ENCODE measurements at regions of chr2 and their contacts with region 1.

Region 1: DNA sequence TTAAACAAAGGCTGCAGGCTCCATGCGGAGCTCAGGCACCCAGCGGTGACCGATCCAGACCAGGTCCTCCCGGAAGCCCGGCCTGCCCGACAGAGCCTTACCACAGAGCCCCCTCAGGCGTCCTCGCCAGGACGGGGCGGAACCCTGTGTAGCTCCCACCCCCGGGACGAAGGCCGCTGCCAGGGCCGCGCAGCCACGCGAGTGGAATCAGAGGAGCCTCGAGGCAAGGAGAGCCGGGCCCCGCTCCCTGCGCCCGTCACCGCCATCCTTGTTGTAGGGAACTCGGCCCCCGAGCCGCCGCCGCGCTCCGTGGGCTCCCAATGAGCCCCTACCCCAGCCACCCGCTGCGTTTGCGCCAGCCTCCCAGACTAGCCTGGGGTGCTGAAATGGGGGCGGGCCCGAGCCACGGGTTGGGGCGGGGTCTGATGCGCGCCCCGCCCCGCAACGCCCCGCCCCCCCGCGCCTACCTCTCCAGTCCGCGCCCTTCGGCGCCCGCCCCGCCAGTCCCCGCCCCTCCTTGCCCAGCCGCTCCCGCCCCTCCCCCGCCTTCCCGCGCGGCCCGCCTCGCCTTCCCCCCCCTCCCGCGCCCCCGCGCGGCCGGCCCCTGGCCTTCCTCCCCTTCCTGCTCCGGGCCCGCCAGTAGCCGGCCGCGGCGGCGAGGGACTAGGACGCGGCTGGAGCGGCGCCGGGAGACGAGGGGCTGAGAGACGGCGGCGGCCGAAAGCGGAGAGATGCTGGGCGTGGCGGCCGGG is at the start of gene LIMS1:
- DNase-seq: peak; percentile 77 to 93 (median 83)
- H3K4me3 ChIP-seq: peak within 1 kb of the TSS; percentile 87
- H3K4me3 Mint-ChIP-seq: peak within 1 kb of the TSS; percentile 93 to 98 (median 96)
- H3K27ac ChIP-seq: peak within 1 kb of the TSS; percentile 76
- H3K27ac Mint-ChIP-seq: peak within 1 kb of the TSS; percentile 79 to 98 (median 91)
- H3K4me1 ChIP-seq: peaks cover 7% of the 10 kb centered on the region
- H3K4me1 Mint-ChIP-seq: peaks cover 25 to 50% (median 35%) of the 10 kb centered on the region in 3 donors
- H3K27me3 ChIP-seq: no peaks in the 10 kb centered on the region
- H3K27me3 Mint-ChIP-seq: no peaks in the 10 kb centered on the region
- total RNA-seq, gene LIMS1: 59.4 TPM

Region 2: DNA sequence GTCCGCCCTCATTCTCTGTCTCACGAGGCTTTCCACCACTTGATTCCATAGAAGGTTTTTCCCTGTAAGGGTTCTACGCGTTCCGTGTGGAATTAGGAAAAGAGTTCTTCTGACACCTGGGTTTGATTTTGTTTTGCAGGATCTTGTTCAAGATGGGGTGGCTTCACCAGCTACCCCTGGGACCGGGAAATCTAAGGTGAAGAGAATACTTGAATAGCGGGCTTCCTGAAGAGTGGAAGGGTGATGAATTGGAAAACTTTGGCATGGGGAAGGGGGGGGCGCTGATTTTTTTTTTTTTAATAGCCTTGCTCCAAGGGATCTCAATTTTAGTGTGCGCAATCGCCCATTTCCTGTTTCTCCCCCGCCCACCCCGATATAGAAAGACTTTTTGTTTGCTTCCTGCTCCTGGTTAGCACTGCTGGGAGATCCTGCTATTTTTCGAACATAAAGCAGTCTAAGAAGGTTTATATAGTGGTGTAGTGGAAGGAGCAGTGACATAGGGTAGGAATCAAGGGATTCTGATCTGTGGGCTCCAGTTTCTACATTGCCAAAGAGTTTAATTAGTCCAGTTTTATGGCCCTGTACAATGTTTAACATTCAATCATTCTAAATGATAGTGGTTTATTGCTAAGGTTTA is 84.4 kb before region 1 on chr2:
- CTCF ChIA-PET with region 1: no interaction called
- POLR2A ChIA-PET with region 1: interaction called, 12 read pairs
- DNase-seq: peak; percentile 37 to 60 (median 40)
- H3K4me3 ChIP-seq: peak overlapping the region; percentile 100
- H3K4me3 Mint-ChIP-seq: peak overlapping the region; percentile 92 to 100 (median 97)
- H3K27ac ChIP-seq: peak overlapping the region; percentile 99
- H3K27ac Mint-ChIP-seq: peak overlapping the region; percentile 97 to 100 (median 99)
- H3K4me1 ChIP-seq: peaks cover 22% of the 10 kb centered on the region
- H3K4me1 Mint-ChIP-seq: peaks cover 40 to 57% (median 51%) of the 10 kb centered on the region in 3 donors
- H3K27me3 ChIP-seq: no peaks in the 10 kb centered on the region
- H3K27me3 Mint-ChIP-seq: peaks cover 0 to 2% of the 10 kb centered on the region in 2 donors

Region 3: GRCh38 chr2:108629417-108629816 is 95.4 kb after region 1 on chr2:
- CTCF ChIA-PET with region 1: no interaction called
- POLR2A ChIA-PET with region 1: no interaction called
- DNase-seq: no peak
- H3K4me3 ChIP-seq: no peak overlapping the region
- H3K4me3 Mint-ChIP-seq: peak overlapping the region in 6 of 7 donors; percentile 8 to 63 (median 14)
- H3K27ac ChIP-seq: no peak overlapping the region
- H3K27ac Mint-ChIP-seq: peak overlapping the region; percentile 28 to 88 (median 78)
- H3K4me1 ChIP-seq: peaks cover 26% of the 10 kb centered on the region
- H3K4me1 Mint-ChIP-seq: peaks cover 61 to 91% (median 84%) of the 10 kb centered on the region in 3 donors
- H3K27me3 ChIP-seq: no peaks in the 10 kb centered on the region
- H3K27me3 Mint-ChIP-seq: peaks cover 0 to under 1% of the 10 kb centered on the region in 2 donors

Measured in CD8-positive, alpha-beta memory T cell (primary cell).